ENCODE measurements at regions of chr22 and their contacts with region 1.

Region 1: DNA sequence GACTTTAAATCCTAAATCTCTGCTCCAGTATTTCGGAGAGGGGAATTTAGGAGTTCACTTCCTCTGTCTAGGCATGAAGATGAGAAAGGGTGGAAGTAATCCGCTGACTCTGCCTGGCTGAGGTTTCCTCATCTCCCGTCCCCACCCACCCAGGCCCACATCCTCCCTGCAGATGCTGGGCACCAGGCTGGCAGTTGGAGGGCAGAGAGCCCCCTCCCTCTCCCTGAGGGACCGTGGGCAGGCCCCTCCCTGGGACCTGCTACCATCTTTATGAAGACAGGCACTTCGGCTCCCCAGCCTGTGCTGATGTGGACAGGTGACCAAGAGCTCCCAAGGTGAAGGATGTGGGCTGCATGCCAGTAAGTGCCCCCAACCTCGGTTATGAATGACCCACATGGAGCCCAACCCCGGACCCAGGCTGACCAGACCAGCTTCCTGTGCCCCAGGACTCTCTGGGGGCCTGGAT is 6.7 kb downstream of the CASTOR1 start:
- DNase-seq: no peak
- ATAC-seq: no peak
- H3K4me3 ChIP-seq: no peak overlapping the region
- H3K27ac ChIP-seq: no peak overlapping the region
- H3K4me1 ChIP-seq: no peaks in the 10 kb centered on the region
- H3K27me3 ChIP-seq: no peaks in the 10 kb centered on the region

Region 2: GRCh38 chr22:30351226-30351625 is 68.6 kb after region 1 on chr22:
- intact Hi-C with region 1: no loop called
- DNase-seq: no peak
- ATAC-seq: no peak
- H3K4me3 ChIP-seq: no peak overlapping the region
- H3K27ac ChIP-seq: no peak overlapping the region
- H3K4me1 ChIP-seq: no peaks in the 10 kb centered on the region
- H3K27me3 ChIP-seq: no peaks in the 10 kb centered on the region

Region 3: GRCh38 chr22:30375312-30375849 is 92.7 kb after region 1 on chr22:
- intact Hi-C with region 1: loop called in 1 of 2 experiments (anchors 5 kb)
- DNase-seq: no peak
- ATAC-seq: no peak
- H3K4me3 ChIP-seq: no peak overlapping the region
- H3K27ac ChIP-seq: no peak overlapping the region
- H3K4me1 ChIP-seq: no peaks in the 10 kb centered on the region
- H3K27me3 ChIP-seq: no peaks in the 10 kb centered on the region